ENCODE measurements at regions of chr18 and their contacts with region 1.

Region 1: GRCh38 chr18:2655178-2655953 is at the start of gene SMCHD1:
- DNase-seq: peak; percentile 93
- ATAC-seq: peak; percentile 92
- total RNA-seq, gene SMCHD1: 93.2 TPM

Region 2: GRCh38 chr18:741931-742512 is 1913.3 kb before region 1 on chr18:
- intact Hi-C with region 1: no loop called
- DNase-seq: no peak
- ATAC-seq: peak; percentile 74

Region 3: GRCh38 chr18:2571200-2572143 is 83.9 kb before region 1 on chr18 and contains the starts of genes METTL4 and NDC80:
- intact Hi-C with region 1: loop called (anchors 5 kb)
- DNase-seq: peak; percentile 91
- ATAC-seq: peak; percentile 97
- total RNA-seq, gene METTL4: 12.4 TPM
- total RNA-seq, gene NDC80: 1.3 TPM

Region 4: GRCh38 chr18:2706903-2707302 is 51.5 kb after region 1 on chr18:
- intact Hi-C with region 1: no loop called
- DNase-seq: no peak
- ATAC-seq: no peak

Region 5: DNA sequence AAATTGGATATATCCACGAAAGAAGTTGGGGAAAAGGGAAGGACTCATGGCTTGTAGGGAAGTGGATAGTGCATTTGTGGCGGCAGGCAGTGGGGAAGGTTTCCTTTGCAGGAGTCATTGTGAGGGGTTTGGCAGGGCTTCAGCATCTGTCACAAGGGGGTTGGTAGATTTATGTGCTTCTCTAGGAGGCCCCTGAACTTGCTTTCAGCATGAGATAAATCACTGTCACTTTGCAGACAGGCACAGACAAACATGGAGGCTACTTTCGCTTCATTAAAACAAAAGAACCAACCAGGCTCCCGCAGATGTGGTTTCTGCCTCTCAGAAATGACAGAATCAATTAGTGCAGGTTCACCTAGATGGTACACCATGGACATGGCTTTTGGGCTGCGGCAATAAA is 1135.3 kb after region 1 on chr18:
- intact Hi-C with region 1: no loop called
- DNase-seq: no peak
- ATAC-seq: no peak